Activated naive CD4-positive, alpha-beta T cell treated with anti-CD3 and anti-CD28 coated beads, Interleukin-2, amount 10 ng/mL, durations not matched to agents 7 days and 5 days (primary cell): ENCODE measurements at regions of chr9 and their contacts with region 1.

Region 1: DNA sequence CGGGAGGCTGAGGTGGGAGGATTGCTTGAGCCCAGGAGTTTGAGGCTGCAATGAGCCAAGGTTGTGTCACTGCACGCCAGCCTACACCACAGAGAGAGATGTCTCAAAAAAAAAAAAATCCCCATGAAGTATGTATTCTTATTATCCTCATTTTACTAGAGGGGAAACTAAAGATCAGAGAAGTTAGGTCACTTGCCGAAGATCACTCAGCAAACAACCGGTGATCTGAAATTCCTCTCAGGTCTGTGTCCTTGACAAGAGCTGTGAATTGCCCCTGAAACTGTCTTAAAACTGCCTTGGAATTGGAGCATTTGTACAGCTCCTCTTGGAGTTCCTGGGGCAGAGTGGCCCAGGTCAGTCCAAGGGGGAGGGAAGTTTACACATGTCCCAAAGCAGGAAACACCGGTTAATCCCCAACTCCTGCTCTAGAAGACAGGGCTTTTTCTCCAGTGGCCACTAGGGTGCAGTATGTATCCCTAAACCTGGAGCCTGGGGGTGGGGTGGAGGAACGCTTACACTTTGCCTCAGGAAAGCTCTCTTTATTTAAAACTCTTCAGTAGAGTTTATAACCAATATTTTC is 27.6 kb downstream of the AQP7 start:
- DNase-seq: peak; percentile 82
- H3K4me3 Mint-ChIP-seq: no peak overlapping the region
- H3K27ac Mint-ChIP-seq: no peak overlapping the region
- H3K4me1 Mint-ChIP-seq: peaks cover 18% of the 10 kb centered on the region
- H3K27me3 Mint-ChIP-seq: no peaks in the 10 kb centered on the region

Region 2: DNA sequence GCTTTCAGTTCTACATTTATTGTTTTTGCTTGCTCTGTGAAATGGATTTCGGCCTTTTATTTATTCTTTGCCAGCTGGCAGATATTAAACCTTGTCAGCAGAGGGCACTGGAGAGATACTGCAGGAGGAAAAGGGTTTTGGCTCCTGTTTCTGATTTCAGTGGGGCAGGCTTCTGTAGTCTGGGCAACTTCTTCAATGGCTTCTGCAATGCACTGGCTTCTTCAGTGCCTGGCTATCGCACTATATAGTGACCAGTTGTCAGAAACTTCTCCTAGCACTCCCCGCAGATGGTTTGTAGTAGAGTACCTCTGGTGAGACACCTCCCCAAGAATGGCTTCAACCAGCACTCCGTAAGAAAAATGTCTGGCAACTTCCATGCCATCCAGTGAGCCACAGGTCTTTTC is 87.6 kb before region 1 on chr9:
- CTCF ChIA-PET with region 1: interaction called, 15 read pairs
- DNase-seq: peak; percentile 72
- H3K4me3 Mint-ChIP-seq: no peak overlapping the region
- H3K27ac Mint-ChIP-seq: peak overlapping the region; percentile 79
- H3K4me1 Mint-ChIP-seq: peaks cover 41% of the 10 kb centered on the region
- H3K27me3 Mint-ChIP-seq: peaks cover 5% of the 10 kb centered on the region

Region 3: DNA sequence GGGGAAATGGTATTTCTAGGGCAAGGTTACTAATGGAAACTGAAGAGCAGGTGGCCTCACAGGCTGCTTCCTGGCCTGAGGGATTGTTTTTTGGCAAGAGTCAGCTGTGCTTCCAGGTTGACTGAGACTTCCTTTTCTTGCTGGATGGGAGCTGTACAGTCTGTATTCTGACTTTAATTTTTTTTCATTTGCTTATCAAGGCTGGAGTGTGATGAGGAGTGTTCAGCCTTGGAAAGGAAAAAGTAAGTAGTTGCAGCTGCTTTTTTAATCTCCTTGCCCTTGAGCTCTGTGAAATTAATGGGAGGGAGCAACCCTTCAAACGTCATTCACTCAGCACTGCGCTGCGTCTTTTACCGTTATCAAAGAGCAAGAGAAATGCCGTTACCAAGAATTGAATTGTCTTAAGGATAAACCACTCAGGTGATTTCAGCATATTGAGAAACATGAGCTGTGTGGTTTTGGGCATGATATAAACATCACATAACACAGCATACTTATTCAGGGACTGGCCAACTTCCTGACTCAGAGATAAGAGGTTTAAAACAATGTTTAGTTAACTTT is 20.0 kb before region 1 on chr9:
- CTCF ChIA-PET with region 1: interaction called, 25 read pairs
- DNase-seq: no peak
- H3K4me3 Mint-ChIP-seq: no peak overlapping the region
- H3K27ac Mint-ChIP-seq: peak overlapping the region; percentile 3
- H3K4me1 Mint-ChIP-seq: peaks cover 11% of the 10 kb centered on the region
- H3K27me3 Mint-ChIP-seq: no peaks in the 10 kb centered on the region

Region 4: GRCh38 chr9:33415501-33416038 is 40.8 kb after region 1 on chr9:
- CTCF ChIA-PET with region 1: interaction called, 42 read pairs
- DNase-seq: peak; percentile 99
- H3K4me3 Mint-ChIP-seq: peak overlapping the region; percentile 68
- H3K27ac Mint-ChIP-seq: peak overlapping the region; percentile 98
- H3K4me1 Mint-ChIP-seq: peaks cover 69% of the 10 kb centered on the region
- H3K27me3 Mint-ChIP-seq: peaks cover 15% of the 10 kb centered on the region

Region 5: DNA sequence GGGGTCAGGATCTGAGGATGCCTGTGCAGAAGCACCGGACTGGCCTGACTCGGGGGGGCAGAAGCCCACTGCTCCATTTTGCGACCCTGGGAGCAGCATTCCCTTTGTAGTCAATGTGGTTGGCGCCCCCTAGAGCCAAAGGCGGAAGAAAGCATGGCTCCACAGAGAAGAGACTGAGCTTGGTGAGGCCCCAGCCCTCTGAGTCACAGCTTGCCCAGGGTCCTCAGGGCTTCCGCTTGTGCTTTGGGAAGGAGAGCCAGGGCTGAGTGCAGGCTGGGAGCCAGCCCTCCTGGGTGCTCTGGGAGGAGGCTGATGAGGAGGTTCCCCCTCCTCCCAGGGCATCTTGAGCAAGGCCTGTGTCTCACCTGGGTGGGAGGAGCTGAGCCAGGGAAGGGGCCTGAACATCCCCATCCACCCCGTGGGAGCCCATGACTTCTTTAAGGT is 78.1 kb after region 1 on chr9:
- CTCF ChIA-PET with region 1: interaction called, 26 read pairs
- DNase-seq: peak; percentile 68
- H3K4me3 Mint-ChIP-seq: no peak overlapping the region
- H3K27ac Mint-ChIP-seq: peak overlapping the region; percentile 90
- H3K4me1 Mint-ChIP-seq: peaks cover 76% of the 10 kb centered on the region
- H3K27me3 Mint-ChIP-seq: no peaks in the 10 kb centered on the region

Region 6: DNA sequence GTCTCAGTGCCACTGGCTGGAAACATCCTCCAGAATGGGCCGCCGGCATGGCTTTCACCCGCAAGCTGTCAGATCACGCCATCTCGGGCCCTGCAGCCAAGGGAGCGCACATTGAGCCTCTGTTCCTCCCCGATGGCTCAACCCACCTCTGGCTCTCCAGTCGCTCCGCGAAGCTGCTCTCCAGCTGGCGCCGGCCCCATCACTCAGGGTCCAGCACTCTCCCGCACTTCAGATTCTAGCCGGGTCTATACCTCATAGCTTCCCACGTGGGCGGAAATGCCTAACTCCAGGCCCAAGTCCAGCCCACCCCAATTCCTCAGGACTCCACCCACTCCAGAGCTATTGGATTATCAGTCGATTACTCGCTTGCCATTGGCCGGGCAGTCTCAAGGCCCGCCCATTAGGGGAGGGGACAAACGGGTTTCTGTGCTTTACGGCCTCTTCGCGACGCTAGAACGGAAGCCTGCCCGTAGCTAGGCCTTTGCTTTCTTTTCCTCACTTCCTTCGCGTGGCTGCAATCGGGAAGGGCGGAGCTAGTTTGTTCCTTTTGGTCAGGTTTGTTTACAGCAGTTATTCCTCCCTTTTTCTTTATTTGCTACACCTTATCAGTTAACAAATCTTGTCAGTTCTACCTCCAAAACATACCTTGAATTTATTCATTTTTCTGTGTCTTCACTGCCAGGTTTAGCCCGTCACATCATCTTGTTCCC is 99.1 kb after region 1 on chr9 and contains the start of gene NOL6:
- CTCF ChIA-PET with region 1: interaction called, 99 read pairs
- DNase-seq: peak; percentile 99
- H3K4me3 Mint-ChIP-seq: peak within 1 kb of the TSS; percentile 96
- H3K27ac Mint-ChIP-seq: peak within 1 kb of the TSS; percentile 93
- H3K4me1 Mint-ChIP-seq: peaks cover 30% of the 10 kb centered on the region
- H3K27me3 Mint-ChIP-seq: no peaks in the 10 kb centered on the region